ENCODE measurements at regions of chr7 and their contacts with region 1.

Region 1: GRCh38 chr7:73328696-73329095 is 735 bp downstream of the FKBP6 start:
- DNase-seq: no peak
- ATAC-seq: no peak
- H3K4me3 ChIP-seq: no peak overlapping the region
- H3K27ac ChIP-seq: no peak overlapping the region
- H3K4me1 ChIP-seq: no peaks in the 10 kb centered on the region
- H3K27me3 ChIP-seq: peaks cover 10% of the 10 kb centered on the region
- CTCF ChIP-seq: no peak
- POLR2A ChIP-seq: no peak
- RAD21 ChIP-seq: no peak

Region 2: GRCh38 chr7:73451780-73452398 is 123.2 kb after region 1 on chr7:
- CTCF ChIA-PET with region 1: interaction called, 6 read pairs
- POLR2A ChIA-PET with region 1: no interaction called
- dilution Hi-C with region 1: no loop called
- in situ Hi-C with region 1: no loop called
- intact Hi-C with region 1: loop called (anchors 1 kb)
- DNase-seq: peak; percentile 74
- ATAC-seq: peak; percentile 79
- H3K4me3 ChIP-seq: no peak overlapping the region
- H3K27ac ChIP-seq: no peak overlapping the region
- H3K4me1 ChIP-seq: peaks cover 17% of the 10 kb centered on the region
- H3K27me3 ChIP-seq: no peaks in the 10 kb centered on the region
- CTCF ChIP-seq: peak; percentile 98
- POLR2A ChIP-seq: peak; percentile 44; the same call in 1 of the 2 replicates
- RAD21 ChIP-seq: peak; percentile 98